GM12878 (cell line): ENCODE measurements at regions of chr18 and their contacts with region 1.

Region 1: GRCh38 chr18:56702946-56703345 is 51.8 kb downstream of the WDR7 start:
- DNase-seq: no peak
- ATAC-seq: peak; percentile 48
- H3K4me3 ChIP-seq: no peak overlapping the region
- H3K27ac ChIP-seq: no peak overlapping the region
- H3K4me1 ChIP-seq: no peaks in the 10 kb centered on the region
- H3K27me3 ChIP-seq: no peaks in the 10 kb centered on the region
- CTCF ChIP-seq: peak; percentile 28 to 43 (median 43); a peak in 5 of 6 replicates
- EP300 ChIP-seq: no peak
- POLR2A ChIP-seq: no peak
- RAD21 ChIP-seq: peak; percentile 64

Region 2: GRCh38 chr18:56489893-56490292 is 213.1 kb before region 1 on chr18:
- CTCF ChIA-PET with region 1: no interaction called
- POLR2A ChIA-PET with region 1: no interaction called
- RAD21 ChIA-PET with region 1: no interaction called
- SMC1A ChIA-PET with region 1: no interaction called
- in situ Hi-C with region 1: no loop called
- intact Hi-C with region 1: no loop called
- DNase-seq: no peak
- ATAC-seq: no peak
- H3K4me3 ChIP-seq: no peak overlapping the region
- H3K27ac ChIP-seq: no peak overlapping the region
- H3K4me1 ChIP-seq: no peaks in the 10 kb centered on the region
- H3K27me3 ChIP-seq: peaks cover 0 to 2% of the 10 kb centered on the region in 2 experiments; a peak in 1 of 4 replicates
- CTCF ChIP-seq: no peak
- EP300 ChIP-seq: no peak
- POLR2A ChIP-seq: no peak
- RAD21 ChIP-seq: no peak

Region 3: DNA sequence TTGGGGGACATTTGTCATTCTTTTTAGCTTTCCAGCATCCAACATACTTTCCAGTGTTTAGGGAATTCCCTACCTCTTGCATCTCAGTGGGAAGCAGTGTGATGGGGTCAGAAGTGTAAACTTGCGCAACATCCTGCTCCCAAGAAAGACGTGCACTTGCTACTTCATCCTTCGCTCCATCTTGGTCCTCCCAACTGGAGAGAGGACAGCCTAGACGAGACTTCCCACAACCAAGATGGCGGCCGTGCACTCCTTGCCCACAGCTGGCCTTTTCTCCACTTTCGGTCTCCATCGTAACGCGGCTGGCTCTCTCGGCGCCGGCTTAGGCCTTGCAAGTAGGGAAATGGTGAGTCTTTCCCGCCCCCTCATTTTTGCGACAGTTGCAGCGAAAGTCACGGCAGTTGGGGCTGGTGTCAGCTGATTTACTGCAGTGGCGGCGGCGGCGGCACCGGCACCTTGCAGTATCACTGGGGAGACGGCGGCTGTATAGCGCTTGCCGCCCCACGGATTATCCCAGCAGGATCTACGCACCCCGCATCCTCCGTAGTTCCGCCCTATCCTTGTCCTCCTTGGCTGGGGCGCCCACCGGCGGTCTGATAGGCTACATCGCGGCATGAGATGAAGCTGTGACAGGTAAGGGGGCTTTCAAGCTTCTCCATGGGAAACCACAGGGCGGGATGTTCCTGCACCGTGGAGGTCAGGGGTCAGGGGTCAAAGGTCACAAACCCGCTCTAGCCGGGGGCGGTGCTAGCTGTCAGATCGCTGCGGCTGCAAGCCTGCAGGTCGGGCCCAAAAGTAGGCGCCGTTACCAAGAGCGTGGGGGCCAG is 51.8 kb before region 1 on chr18 and contains the start of gene WDR7:
- CTCF ChIA-PET with region 1: interaction called, 69 read pairs
- POLR2A ChIA-PET with region 1: interaction called, 4 read pairs
- RAD21 ChIA-PET with region 1: no interaction called
- SMC1A ChIA-PET with region 1: interaction called, 30 read pairs
- in situ Hi-C with region 1: no loop called
- intact Hi-C with region 1: no loop called
- DNase-seq: peak; percentile 91
- ATAC-seq: peak; percentile 96
- H3K4me3 ChIP-seq: peak within 1 kb of the TSS; percentile 67
- H3K27ac ChIP-seq: peak within 1 kb of the TSS; percentile 77
- H3K4me1 ChIP-seq: no peaks in the 10 kb centered on the region; the same call in none of the 2 replicates
- H3K27me3 ChIP-seq: no peaks in the 10 kb centered on the region
- CTCF ChIP-seq: no peak
- EP300 ChIP-seq: no peak
- POLR2A ChIP-seq: peak; percentile 86
- RAD21 ChIP-seq: no peak
- polyA plus RNA-seq, gene WDR7: 2.8 to 3.1 TPM

Region 4: DNA sequence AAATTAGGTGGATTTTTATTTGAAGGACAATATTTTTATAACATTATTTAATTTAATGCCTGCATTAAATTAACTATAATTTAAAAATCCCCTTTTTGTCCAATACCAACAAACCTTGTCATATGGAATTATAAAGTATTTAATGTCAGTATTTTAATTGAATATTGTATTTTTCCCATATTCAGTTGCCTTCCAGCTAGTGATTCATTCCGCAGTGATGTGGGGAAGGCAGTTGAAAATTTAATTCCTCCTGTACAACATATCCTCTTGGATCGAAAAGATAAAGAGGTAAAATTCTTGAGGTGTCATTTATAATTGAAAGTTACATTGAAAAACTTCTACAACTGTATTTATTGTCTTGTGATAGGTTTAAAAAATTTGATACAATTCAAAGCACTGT is 11.4 kb before region 1 on chr18:
- CTCF ChIA-PET with region 1: interaction called, 35 read pairs
- POLR2A ChIA-PET with region 1: no interaction called
- RAD21 ChIA-PET with region 1: interaction called, 4 read pairs
- SMC1A ChIA-PET with region 1: interaction called, 6 read pairs
- in situ Hi-C with region 1: no loop called
- intact Hi-C with region 1: no loop called
- DNase-seq: no peak
- ATAC-seq: no peak
- H3K4me3 ChIP-seq: no peak overlapping the region
- H3K27ac ChIP-seq: no peak overlapping the region
- H3K4me1 ChIP-seq: no peaks in the 10 kb centered on the region
- H3K27me3 ChIP-seq: no peaks in the 10 kb centered on the region
- CTCF ChIP-seq: no peak
- EP300 ChIP-seq: no peak
- POLR2A ChIP-seq: no peak
- RAD21 ChIP-seq: no peak

Region 5: GRCh38 chr18:56799756-56800155 is 96.8 kb after region 1 on chr18:
- CTCF ChIA-PET with region 1: no interaction called
- POLR2A ChIA-PET with region 1: no interaction called
- RAD21 ChIA-PET with region 1: no interaction called
- SMC1A ChIA-PET with region 1: no interaction called
- in situ Hi-C with region 1: no loop called
- intact Hi-C with region 1: no loop called
- DNase-seq: no peak
- ATAC-seq: no peak
- H3K4me3 ChIP-seq: no peak overlapping the region
- H3K27ac ChIP-seq: no peak overlapping the region
- H3K4me1 ChIP-seq: no peaks in the 10 kb centered on the region
- H3K27me3 ChIP-seq: no peaks in the 10 kb centered on the region
- CTCF ChIP-seq: no peak
- EP300 ChIP-seq: no peak
- POLR2A ChIP-seq: no peak
- RAD21 ChIP-seq: no peak

Region 6: DNA sequence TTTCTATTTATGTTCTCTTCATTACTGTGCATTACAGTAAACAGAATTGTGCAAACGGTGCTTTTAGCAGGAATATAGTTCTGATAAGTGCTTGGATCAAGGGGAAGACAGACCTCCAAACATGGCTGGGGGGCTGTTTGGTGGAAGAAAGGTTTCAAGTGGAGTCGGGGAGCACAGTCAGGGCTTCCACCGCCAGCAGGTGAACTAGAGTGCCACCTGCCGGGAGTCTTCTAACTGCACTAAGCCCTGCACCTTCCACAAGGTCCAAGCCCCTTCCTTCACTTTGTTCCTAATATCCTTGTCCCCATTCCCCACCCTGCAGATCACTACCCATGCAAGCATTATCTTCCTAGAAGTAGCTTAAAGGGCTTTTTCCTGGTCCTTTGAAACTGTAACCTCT is 743.4 kb after region 1 on chr18:
- CTCF ChIA-PET with region 1: interaction called, 3 read pairs
- POLR2A ChIA-PET with region 1: no interaction called
- RAD21 ChIA-PET with region 1: no interaction called
- SMC1A ChIA-PET with region 1: no interaction called
- in situ Hi-C with region 1: no loop called
- intact Hi-C with region 1: loop called (anchors 5 kb)
- DNase-seq: no peak
- ATAC-seq: peak; percentile 90
- H3K4me3 ChIP-seq: no peak overlapping the region
- H3K27ac ChIP-seq: no peak overlapping the region
- H3K4me1 ChIP-seq: no peaks in the 10 kb centered on the region
- H3K27me3 ChIP-seq: peaks cover 2 to 10% of the 10 kb centered on the region in 2 experiments
- CTCF ChIP-seq: peak; percentile 77 to 82 (median 79)
- EP300 ChIP-seq: no peak
- POLR2A ChIP-seq: no peak
- RAD21 ChIP-seq: peak; percentile 70